ENCODE measurements at regions of chr9 and their contacts with region 1.

Region 1: GRCh38 chr9:35829084-35829763 is at the start of gene TMEM8B:
- DNase-seq: peak; percentile 80 to 95 (median 88)
- ATAC-seq: peak; percentile 95
- H3K4me3 ChIP-seq: peak within 1 kb of the TSS; percentile 88
- H3K4me3 Mint-ChIP-seq: peak within 1 kb of the TSS; percentile 84 to 100 (median 94)
- H3K27ac ChIP-seq: peak within 1 kb of the TSS; percentile 94
- H3K27ac Mint-ChIP-seq: peak within 1 kb of the TSS; percentile 91 to 99 (median 94)
- H3K4me1 ChIP-seq: peaks cover 4 to 14% of the 10 kb centered on the region in 2 donors
- H3K4me1 Mint-ChIP-seq: peaks cover 25 to 48% (median 43%) of the 10 kb centered on the region in 7 donors
- H3K27me3 ChIP-seq: no peaks in the 10 kb centered on the region
- H3K27me3 Mint-ChIP-seq: peaks cover 0 to 5% (median 0%) of the 10 kb centered on the region in 5 donors
- total RNA-seq, gene TMEM8B: 3.9 to 11.6 (median 10.6) TPM

Region 2: DNA sequence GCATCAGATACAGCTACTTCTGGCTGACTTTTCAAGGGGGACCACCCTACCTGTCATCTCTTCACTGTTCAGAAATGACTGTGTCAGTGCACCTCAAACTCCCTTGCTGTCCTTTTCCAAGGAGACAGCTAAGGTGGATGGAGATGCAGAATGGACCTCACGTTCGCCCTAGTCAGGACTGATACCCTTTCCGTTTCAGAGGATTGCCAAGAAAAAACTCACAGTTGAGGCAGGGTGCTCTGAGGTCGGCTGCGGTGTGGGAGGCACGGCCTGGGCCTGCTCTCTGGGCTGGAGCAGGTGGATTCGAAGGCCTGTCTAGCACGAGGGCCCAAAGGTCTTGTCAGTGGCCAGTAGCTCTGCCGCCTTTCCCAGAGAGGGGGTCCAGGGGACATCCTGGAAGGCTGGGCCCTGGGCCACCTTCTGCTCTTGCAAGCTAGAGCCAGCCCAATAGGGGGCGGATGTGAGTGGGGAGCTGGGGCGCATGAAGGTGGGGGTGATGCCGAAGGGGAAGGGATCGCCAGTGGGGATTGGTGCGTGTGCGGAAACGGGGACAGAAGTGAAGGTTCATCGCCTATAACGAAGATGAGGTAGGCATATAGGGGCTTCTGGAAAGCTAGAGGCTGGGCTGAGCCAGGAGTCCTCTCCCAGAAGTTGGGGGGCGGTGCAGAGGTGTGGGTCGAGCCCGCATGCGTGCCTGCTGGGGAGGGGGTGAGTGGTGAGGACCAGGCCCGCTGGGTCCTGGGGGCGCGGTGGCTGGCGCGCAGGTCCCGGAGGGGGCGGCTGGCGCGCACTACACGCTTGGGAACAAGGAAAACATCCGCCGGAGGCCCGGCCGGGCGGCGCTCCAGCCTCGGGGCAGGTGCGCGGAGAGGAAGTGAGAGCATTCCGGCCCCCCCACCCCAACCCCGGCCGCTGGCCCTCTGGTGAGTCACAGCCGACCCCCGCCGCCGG is 72.7 kb before region 1 on chr9:
- CTCF ChIA-PET with region 1: no interaction called
- POLR2A ChIA-PET with region 1: no interaction called
- intact Hi-C with region 1: loop called (anchors 1 to 2 kb)
- DNase-seq: peak; percentile 58 to 80 (median 75)
- ATAC-seq: peak; percentile 95
- H3K4me3 ChIP-seq: peak overlapping the region; percentile 92
- H3K4me3 Mint-ChIP-seq: peak overlapping the region; percentile 89 to 100 (median 96)
- H3K27ac ChIP-seq: peak overlapping the region; percentile 82
- H3K27ac Mint-ChIP-seq: peak overlapping the region; percentile 88 to 99 (median 94)
- H3K4me1 ChIP-seq: peaks cover 6 to 9% of the 10 kb centered on the region in 2 donors
- H3K4me1 Mint-ChIP-seq: peaks cover 34 to 61% (median 52%) of the 10 kb centered on the region in 7 donors
- H3K27me3 ChIP-seq: no peaks in the 10 kb centered on the region
- H3K27me3 Mint-ChIP-seq: no peaks in the 10 kb centered on the region

Region 3: GRCh38 chr9:35790385-35791296 is 38.6 kb before region 1 on chr9:
- CTCF ChIA-PET with region 1: interaction called, 18 read pairs
- POLR2A ChIA-PET with region 1: no interaction called
- intact Hi-C with region 1: loop called (anchors 1 kb)
- DNase-seq: peak; percentile 36 to 70 (median 62)
- ATAC-seq: peak; percentile 90
- H3K4me3 ChIP-seq: no peak overlapping the region
- H3K4me3 Mint-ChIP-seq: peak overlapping the region in 2 of 10 donors; percentile 31 to 58
- H3K27ac ChIP-seq: no peak overlapping the region
- H3K27ac Mint-ChIP-seq: no peak overlapping the region
- H3K4me1 ChIP-seq: no peaks in the 10 kb centered on the region
- H3K4me1 Mint-ChIP-seq: peaks cover 6 to 21% (median 10%) of the 10 kb centered on the region in 7 donors
- H3K27me3 ChIP-seq: no peaks in the 10 kb centered on the region
- H3K27me3 Mint-ChIP-seq: no peaks in the 10 kb centered on the region

Region 4: GRCh38 chr9:35844716-35845270 is 15.6 kb after region 1 on chr9:
- CTCF ChIA-PET with region 1: no interaction called
- POLR2A ChIA-PET with region 1: interaction called, 3 read pairs
- intact Hi-C with region 1: loop called in 1 of 2 experiments (anchors 1 kb)
- DNase-seq: peak in 7 of 9 donors; percentile 60 to 81 (median 77)
- ATAC-seq: peak; percentile 90
- H3K4me3 ChIP-seq: no peak overlapping the region
- H3K4me3 Mint-ChIP-seq: peak overlapping the region in 7 of 10 donors; percentile 4 to 56 (median 21)
- H3K27ac ChIP-seq: no peak overlapping the region
- H3K27ac Mint-ChIP-seq: peak overlapping the region in 6 of 9 donors; percentile 30 to 77 (median 58)
- H3K4me1 ChIP-seq: peaks cover 0 to 19% of the 10 kb centered on the region in 2 donors
- H3K4me1 Mint-ChIP-seq: peaks cover 14 to 30% (median 26%) of the 10 kb centered on the region in 7 donors
- H3K27me3 ChIP-seq: no peaks in the 10 kb centered on the region
- H3K27me3 Mint-ChIP-seq: no peaks in the 10 kb centered on the region

Measured in naive thymus-derived CD4-positive, alpha-beta T cell (primary cell).